Ovary (tissue), 10 donors: ENCODE measurements at regions of chr17 and their contacts with region 1.

Region 1: GRCh38 chr17:4625181-4625617 is 16.3 kb downstream of the ALOX15 start:
- DNase-seq: no peak
- H3K4me3 ChIP-seq: no peak overlapping the region
- H3K27ac ChIP-seq: no peak overlapping the region
- H3K4me1 ChIP-seq: peaks cover 1% of the 10 kb centered on the region
- H3K27me3 ChIP-seq: no peaks in the 10 kb centered on the region
- CTCF ChIP-seq: no peak
- EP300 ChIP-seq: no peak
- POLR2A ChIP-seq: no peak

Region 2: GRCh38 chr17:4565209-4566141 is 59.7 kb before region 1 on chr17:
- intact Hi-C with region 1: loop called (anchors 2 to 5 kb)
- DNase-seq: peak in 3 of 5 donors; percentile 62 to 72 (median 71)
- H3K4me3 ChIP-seq: no peak overlapping the region
- H3K27ac ChIP-seq: no peak overlapping the region
- H3K4me1 ChIP-seq: peaks cover 2% of the 10 kb centered on the region
- H3K27me3 ChIP-seq: no peaks in the 10 kb centered on the region
- CTCF ChIP-seq: peak; percentile 66 to 74 (median 70)
- EP300 ChIP-seq: no peak
- POLR2A ChIP-seq: no peak

Region 3: GRCh38 chr17:4583782-4584100 is 41.5 kb before region 1 on chr17:
- intact Hi-C with region 1: no loop called
- DNase-seq: peak in 3 of 5 donors; percentile 65 to 73 (median 65)
- H3K4me3 ChIP-seq: peak overlapping the region; percentile 41
- H3K27ac ChIP-seq: peak overlapping the region; percentile 64 to 81
- H3K4me1 ChIP-seq: peaks cover 5% of the 10 kb centered on the region
- H3K27me3 ChIP-seq: no peaks in the 10 kb centered on the region
- CTCF ChIP-seq: peak; percentile 35 to 53 (median 49)
- EP300 ChIP-seq: no peak
- POLR2A ChIP-seq: no peak

Region 4: DNA sequence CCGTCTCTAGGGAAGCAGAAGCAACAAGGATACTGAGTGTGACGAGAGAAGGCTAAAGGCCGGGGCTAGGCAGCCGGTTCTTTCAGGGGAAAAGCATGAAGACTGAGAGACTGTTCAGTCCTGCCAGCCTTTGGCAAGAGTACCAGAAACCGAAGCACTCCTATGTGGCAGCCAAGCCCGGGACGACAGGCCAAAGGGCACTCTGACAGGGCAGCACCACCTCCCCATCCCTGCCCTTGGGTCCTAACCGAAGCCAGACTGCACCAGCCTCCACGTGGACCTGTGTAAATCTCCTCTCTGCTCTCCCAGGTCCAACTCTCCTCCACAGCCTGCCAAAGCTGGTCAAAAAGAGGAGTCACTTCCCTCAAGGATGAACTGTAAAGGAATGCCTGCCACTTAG is 39.8 kb after region 1 on chr17:
- intact Hi-C with region 1: no loop called
- DNase-seq: no peak
- H3K4me3 ChIP-seq: no peak overlapping the region
- H3K27ac ChIP-seq: no peak overlapping the region
- H3K4me1 ChIP-seq: no peaks in the 10 kb centered on the region
- H3K27me3 ChIP-seq: no peaks in the 10 kb centered on the region
- CTCF ChIP-seq: no peak
- EP300 ChIP-seq: no peak
- POLR2A ChIP-seq: no peak